ENCODE measurements at regions of chr5 and their contacts with region 1.

Region 1: DNA sequence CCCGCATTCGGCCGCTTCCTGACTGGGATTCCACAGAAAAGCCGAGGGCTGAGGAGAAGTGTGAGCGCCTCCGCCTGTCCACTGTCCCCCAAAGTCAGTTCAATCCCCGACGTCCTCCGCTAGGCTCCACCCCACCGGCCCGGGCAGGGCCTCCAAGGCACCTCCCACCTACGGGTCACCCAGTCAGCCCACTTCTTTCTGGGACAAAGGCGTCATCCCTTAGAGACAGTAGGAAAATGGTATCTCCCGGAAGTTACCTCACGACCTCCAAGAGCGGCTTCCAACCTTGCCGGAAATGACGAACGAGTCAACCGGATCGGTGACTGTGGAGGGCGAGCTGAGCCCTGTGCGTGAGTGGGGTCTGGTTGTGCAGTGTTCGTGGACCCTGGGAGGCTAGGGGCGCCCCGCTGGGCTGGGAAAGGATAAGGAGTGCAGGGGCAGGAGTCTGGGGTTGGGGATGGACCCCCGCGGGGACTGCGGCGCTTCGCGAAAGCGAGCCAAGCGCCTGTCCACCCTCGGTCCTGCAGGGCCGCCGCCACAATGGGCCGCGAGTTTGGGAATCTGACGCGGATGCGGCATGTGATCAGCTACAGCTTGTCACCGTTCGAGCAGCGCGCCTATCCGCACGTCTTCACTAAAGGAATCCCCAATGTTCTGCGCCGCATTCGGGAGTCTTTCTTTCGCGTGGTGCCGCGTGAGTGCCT is at the starts of genes GDF9 and UQCRQ:
- DNase-seq: peak; percentile 95
- H3K4me3 Mint-ChIP-seq: peak within 1 kb of the TSS; percentile 100
- H3K27ac Mint-ChIP-seq: peak within 1 kb of the TSS; percentile 99
- H3K4me1 Mint-ChIP-seq: peaks cover 28% of the 10 kb centered on the region
- H3K27me3 Mint-ChIP-seq: no peaks in the 10 kb centered on the region
- total RNA-seq, gene GDF9: 0.43 to 0.73 TPM
- total RNA-seq, gene UQCRQ: 540 to 565 TPM

Region 2: DNA sequence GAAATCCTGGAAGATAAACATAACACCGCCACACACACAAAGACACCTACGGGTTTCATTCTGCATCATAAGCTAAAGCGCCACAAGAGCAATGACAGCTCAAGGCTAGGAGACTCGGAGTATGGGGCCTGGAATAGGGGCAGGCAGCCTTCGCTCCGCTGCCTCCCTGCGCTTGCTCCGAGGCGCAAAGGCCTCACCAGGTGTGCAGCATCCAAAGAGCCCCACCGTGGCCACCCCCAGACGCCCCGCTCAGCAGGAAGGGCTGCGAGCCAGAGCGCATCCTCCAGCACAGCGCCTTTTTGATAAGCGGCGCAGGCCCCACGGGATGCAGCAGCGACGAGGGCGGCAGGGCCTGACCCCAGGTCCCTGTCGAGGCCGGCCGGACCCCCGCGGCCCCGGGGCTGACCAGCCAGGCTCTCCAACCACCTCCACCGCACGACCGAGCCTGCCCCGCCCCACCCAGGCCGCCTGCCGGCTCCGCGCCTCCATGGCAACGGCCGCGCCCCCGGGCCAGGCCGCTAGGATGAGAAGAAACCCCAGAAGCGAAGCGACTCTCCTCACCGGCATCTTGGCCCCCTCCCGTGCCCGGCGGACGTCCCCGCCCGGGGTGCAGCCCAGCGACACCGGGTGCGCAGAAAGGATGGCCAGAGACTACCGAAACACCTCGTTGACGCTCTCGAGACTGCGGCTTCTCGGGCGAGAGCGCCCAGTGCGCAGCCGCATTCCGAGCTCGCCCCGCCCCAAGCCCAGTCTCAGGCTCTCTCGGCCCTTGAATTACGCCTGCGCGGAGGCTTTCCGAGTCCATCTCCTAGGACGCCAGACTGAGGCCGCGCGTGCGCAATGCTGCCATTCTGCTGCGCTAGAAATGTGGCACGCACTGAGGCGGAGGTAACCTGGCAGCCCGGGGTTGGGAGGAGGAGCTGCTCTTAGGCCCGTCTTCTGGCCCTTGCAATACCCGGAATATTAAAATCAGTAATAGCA is 129.4 kb before region 1 on chr5 and contains the start of gene KIF3A:
- CTCF ChIA-PET with region 1: no interaction called
- POLR2A ChIA-PET with region 1: no interaction called
- intact Hi-C with region 1: loop called (anchors 5 kb)
- DNase-seq: peak; percentile 99
- H3K4me3 Mint-ChIP-seq: peak within 1 kb of the TSS; percentile 84
- H3K27ac Mint-ChIP-seq: peak within 1 kb of the TSS; percentile 78
- H3K4me1 Mint-ChIP-seq: peaks cover 35% of the 10 kb centered on the region
- H3K27me3 Mint-ChIP-seq: peaks cover 2% of the 10 kb centered on the region
- total RNA-seq, gene KIF3A: 12.1 to 16.1 TPM

Region 3: DNA sequence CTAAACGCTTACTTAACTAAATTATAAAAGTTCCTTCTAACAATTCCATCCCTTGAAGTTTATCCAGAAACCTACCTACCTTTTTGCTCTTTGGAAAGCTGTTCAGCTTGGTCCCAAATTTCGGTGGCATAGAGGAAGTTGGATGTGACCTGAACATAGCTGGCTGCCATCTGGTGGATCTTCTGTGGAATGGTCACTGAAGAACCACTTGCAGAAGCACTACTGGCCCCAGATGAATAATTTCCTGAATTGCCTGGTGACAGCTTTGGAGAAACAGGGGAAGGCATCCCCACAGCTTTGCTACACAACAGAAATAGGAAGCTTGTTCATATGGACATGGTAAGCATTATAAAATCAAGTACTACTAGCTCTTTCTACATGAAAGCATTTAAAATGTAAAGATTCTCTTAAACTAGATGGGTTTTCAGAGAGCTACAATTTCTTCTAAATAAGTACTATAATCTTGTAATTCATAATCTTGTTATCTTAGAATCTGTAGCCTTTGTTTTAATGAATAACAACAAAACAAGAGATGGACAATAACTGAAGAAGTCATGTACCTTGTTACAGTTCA is 16.9 kb after region 1 on chr5:
- CTCF ChIA-PET with region 1: interaction called, 11 read pairs
- POLR2A ChIA-PET with region 1: interaction called, 3 read pairs
- intact Hi-C with region 1: no loop called
- DNase-seq: peak; percentile 38
- H3K4me3 Mint-ChIP-seq: no peak overlapping the region
- H3K27ac Mint-ChIP-seq: no peak overlapping the region
- H3K4me1 Mint-ChIP-seq: peaks cover 3% of the 10 kb centered on the region
- H3K27me3 Mint-ChIP-seq: no peaks in the 10 kb centered on the region

Region 4: GRCh38 chr5:132943362-132944022 is 77.0 kb after region 1 on chr5:
- CTCF ChIA-PET with region 1: no interaction called
- POLR2A ChIA-PET with region 1: no interaction called
- intact Hi-C with region 1: no loop called
- DNase-seq: no peak
- H3K4me3 Mint-ChIP-seq: no peak overlapping the region
- H3K27ac Mint-ChIP-seq: no peak overlapping the region
- H3K4me1 Mint-ChIP-seq: peaks cover 33% of the 10 kb centered on the region
- H3K27me3 Mint-ChIP-seq: no peaks in the 10 kb centered on the region

Region 5: GRCh38 chr5:133025804-133026663 is 159.5 kb after region 1 on chr5 and contains the start of gene ZCCHC10:
- CTCF ChIA-PET with region 1: no interaction called
- POLR2A ChIA-PET with region 1: no interaction called
- intact Hi-C with region 1: loop called (anchors 2 kb)
- DNase-seq: peak; percentile 95
- H3K4me3 Mint-ChIP-seq: peak within 1 kb of the TSS; percentile 79
- H3K27ac Mint-ChIP-seq: peak within 1 kb of the TSS; percentile 83
- H3K4me1 Mint-ChIP-seq: peaks cover 15% of the 10 kb centered on the region
- H3K27me3 Mint-ChIP-seq: no peaks in the 10 kb centered on the region
- total RNA-seq, gene ZCCHC10: 22.6 to 25.5 TPM